ENCODE measurements at regions of chr14 and their contacts with region 1.

Region 1: DNA sequence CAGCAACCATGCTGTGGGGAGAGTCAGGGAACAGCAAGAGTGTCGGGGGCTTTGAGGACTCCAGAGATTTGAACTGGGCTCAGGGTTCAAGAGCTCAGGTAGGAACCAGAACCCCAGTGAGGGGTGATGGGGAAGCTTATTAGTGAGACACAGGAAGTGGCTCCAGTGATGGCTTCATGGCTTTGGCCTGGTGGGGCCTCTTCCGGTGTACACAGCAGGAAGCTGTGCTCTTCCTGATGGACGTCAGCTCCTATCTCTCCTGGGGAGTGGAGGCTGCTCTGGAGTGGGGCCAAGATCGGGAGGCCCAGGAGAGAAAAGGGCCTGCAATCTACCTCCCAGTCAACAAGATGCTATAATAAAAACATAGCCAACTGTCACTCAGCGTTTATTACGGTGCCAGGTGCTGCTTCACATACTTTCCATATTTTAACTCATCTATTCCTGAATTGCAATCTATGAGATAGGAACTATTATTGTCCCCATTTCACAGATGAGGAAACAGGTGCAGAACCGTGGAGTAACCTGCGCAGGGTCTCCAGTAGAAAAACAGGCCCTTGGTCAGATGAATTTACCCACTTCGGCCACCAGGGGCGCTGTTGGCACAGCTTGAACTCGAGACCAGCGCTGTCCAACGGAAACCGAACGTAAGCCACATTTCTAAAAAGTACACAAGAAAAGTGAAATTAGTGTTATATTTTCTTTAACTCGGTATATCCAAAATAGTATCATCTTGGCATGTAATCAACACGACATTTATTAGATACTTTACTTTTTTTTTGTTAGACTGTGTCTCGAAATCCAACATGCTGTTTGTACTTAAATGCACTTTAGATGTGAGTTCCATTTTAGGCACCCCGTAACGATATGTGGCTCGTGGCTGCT is 63.6 kb upstream of the DLK1 start:
- DNase-seq: peak; percentile 60 to 68
- ATAC-seq: peak in 6 of 8 donors; percentile 45 to 66 (median 48)
- H3K4me3 ChIP-seq: no peak overlapping the region
- H3K27ac ChIP-seq: no peak overlapping the region
- H3K4me1 ChIP-seq: peaks cover 0 to 17% (median 10%) of the 10 kb centered on the region in 9 donors
- H3K27me3 ChIP-seq: peaks cover 0 to 47% (median 24%) of the 10 kb centered on the region in 7 donors
- CTCF ChIP-seq: peak; percentile 86 to 97 (median 93)

Region 2: GRCh38 chr14:100828031-100828769 is 165.1 kb after region 1 on chr14:
- intact Hi-C with region 1: loop called in 5 of 10 experiments (anchors 10 kb)
- DNase-seq: no peak
- ATAC-seq: peak in 1 of 8 donors; percentile 10
- H3K4me3 ChIP-seq: peak overlapping the region in 9 of 10 donors; percentile 5 to 53 (median 42)
- H3K27ac ChIP-seq: no peak overlapping the region
- H3K4me1 ChIP-seq: peaks cover 0 to 4% (median 0%) of the 10 kb centered on the region in 9 donors
- H3K27me3 ChIP-seq: peaks cover 0 to 76% (median 67%) of the 10 kb centered on the region in 7 donors
- CTCF ChIP-seq: peak in 8 of 9 donors; percentile 8 to 40 (median 22)

Region 3: DNA sequence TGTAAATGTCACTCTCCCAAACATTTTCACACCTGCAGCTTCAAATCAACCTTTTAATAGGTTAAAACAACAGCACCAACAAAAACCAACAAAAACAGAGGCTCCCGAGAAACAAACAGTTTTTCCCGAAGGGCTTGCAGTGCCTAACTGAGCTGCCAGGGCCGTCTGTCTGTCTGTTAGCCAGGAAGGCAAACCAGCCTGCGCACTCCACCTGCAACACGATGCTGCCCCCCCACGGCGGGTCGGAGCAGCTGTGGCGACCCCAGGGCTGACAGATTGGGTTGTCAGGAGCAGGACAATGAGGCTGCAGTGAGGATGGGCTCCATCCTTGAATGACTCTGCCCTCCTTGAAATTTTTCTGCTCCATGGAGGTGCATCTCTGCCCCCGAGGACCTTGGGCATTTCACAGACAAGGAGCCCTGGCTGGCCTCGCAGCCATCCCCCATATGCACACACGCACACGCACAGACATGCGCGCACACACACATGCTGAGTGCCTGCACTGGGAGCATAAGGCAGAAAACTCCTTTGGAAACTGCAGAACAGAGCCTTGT is 237.8 kb after region 1 on chr14:
- intact Hi-C with region 1: loop called in 1 of 10 experiments (anchors 10 kb)
- DNase-seq: no peak
- ATAC-seq: peak in 2 of 8 donors; percentile 21 to 22
- H3K4me3 ChIP-seq: no peak overlapping the region
- H3K27ac ChIP-seq: no peak overlapping the region
- H3K4me1 ChIP-seq: peaks cover 0 to 27% (median 19%) of the 10 kb centered on the region in 9 donors
- H3K27me3 ChIP-seq: peaks cover 9 to 94% (median 91%) of the 10 kb centered on the region in 7 donors
- CTCF ChIP-seq: peak in 4 of 9 donors; percentile 24 to 38 (median 31)

Region 4: DNA sequence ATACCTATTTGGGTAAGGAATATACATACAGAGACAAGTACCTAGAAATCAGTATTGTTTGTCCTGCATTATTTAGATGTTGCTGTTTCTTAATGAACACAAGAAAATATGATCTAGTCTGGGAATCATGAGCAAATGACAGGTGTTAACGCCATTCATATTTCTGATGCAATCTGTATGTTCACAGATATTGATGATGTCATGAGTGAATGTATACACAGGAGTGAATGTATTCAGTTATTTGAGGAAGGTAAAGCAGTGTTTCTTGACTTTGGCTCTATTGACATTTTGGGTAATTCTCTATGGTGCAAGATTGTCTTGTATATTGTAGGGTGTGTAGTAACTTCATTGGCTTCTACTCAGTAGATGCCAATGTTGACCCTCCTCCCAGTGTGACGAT is 267.1 kb after region 1 on chr14:
- intact Hi-C with region 1: no loop called
- DNase-seq: no peak
- ATAC-seq: no peak
- H3K4me3 ChIP-seq: no peak overlapping the region
- H3K27ac ChIP-seq: no peak overlapping the region
- H3K4me1 ChIP-seq: no peaks in the 10 kb centered on the region
- H3K27me3 ChIP-seq: no peaks in the 10 kb centered on the region
- CTCF ChIP-seq: no peak

Region 5: DNA sequence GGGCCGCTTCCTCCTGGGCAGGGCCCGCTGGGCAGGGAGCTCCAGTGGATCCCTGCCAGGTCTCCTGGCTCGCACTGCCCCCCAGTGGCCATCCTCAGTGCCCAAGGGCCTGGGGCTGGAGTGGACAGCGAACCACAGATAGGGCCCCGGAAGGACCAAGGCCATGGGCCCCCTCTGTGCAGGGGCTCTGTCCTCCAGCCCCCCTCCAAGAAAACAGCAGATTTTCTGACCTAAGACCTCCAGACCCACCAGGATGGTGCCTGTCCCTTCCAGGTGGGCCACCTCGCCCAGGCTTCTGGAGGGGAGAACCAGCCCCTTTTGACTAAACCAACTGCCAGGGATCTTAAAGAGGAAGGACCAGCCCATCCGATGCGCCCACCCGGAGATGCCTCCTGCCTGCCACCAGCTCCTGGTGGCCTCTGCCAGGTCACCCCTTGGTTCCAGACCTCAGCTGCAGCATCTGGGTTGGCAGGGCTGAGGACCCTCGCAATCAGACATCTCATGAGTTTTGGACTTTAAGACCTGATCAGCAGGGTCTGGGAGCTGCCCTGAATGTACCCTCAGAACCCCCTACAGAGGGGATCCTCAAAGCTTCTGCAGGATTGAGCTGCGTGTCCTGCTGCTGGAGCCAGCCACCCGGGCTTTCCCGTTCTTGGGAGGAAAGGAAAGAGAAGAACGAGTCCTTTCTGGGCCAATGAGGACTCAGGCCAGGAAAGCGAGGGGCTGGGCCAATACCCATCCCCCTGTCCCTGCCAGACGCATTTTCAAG is 572.4 kb after region 1 on chr14:
- intact Hi-C with region 1: loop called in 3 of 10 experiments (anchors 5 to 10 kb)
- DNase-seq: peak; percentile 21 to 55
- ATAC-seq: peak in 5 of 8 donors; percentile 65 to 68 (median 66)
- H3K4me3 ChIP-seq: no peak overlapping the region
- H3K27ac ChIP-seq: no peak overlapping the region
- H3K4me1 ChIP-seq: no peaks in the 10 kb centered on the region
- H3K27me3 ChIP-seq: peaks cover 0 to 46% (median 25%) of the 10 kb centered on the region in 7 donors
- CTCF ChIP-seq: peak in 7 of 9 donors; percentile 56 to 74 (median 61)